A549 (cell line): ENCODE measurements at regions of chr17 and their contacts with region 1.

Region 1: DNA sequence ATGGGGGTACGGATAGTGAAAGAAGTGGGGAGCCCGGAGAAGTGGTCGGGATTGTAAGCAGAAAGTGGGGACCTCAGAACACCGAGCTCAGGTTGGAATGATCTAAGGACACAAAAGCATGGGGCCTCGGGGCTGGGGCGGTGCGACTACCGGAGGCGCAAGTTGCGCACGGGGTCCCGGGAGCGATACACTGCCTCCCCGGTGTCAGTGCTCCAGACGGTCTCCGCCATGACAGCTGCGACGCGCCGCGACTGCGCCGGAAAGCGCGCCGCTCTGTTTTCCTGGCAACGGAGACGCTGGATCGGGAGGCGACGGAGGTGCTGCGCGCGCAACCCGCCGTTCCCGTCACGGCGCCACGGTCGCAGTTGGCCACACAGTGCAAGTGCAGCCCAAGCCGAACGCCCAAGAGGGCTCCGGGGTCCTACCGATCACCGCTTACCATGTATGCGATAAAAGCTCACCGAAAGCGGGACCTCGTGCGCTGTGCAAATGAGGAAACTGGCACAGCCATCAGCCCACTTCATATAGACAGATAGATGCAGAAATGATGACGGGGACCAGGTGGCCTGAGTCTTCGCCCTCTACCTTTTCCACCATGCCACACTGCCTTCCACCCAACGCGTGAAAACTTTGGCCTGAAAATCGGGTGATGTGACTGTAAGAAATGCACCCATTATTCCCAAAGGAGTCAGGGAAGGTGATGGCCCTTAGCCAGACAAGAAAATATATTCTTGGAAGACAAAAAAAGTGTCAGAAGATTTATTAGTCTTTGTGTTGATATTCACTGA is at the start of gene MKS1:
- DNase-seq: peak; percentile 95 to 100
- ATAC-seq: peak; percentile 98 to 100
- H3K4me3 ChIP-seq: peak within 1 kb of the TSS; percentile 77
- H3K27ac ChIP-seq: peak within 1 kb of the TSS; percentile 85 to 89
- H3K4me1 ChIP-seq: peaks cover 9% of the 10 kb centered on the region; the same call in 2 of the 3 replicates
- CTCF ChIP-seq: peak; percentile 34; the same call in 2 of the 3 replicates
- EP300 ChIP-seq: no peak
- POLR2A ChIP-seq: peak; percentile 93
- RAD21 ChIP-seq: no peak
- polyA plus RNA-seq, gene MKS1: 18.6 and 19.0 TPM in 2 replicates

Region 2: GRCh38 chr17:58060596-58061191 is 158.5 kb before region 1 on chr17:
- CTCF ChIA-PET with region 1: no interaction called
- POLR2A ChIA-PET with region 1: no interaction called
- DNase-seq: no peak
- ATAC-seq: no peak
- H3K4me3 ChIP-seq: no peak overlapping the region
- H3K27ac ChIP-seq: no peak overlapping the region
- H3K4me1 ChIP-seq: no peaks in the 10 kb centered on the region
- CTCF ChIP-seq: no peak
- EP300 ChIP-seq: no peak
- POLR2A ChIP-seq: no peak
- RAD21 ChIP-seq: no peak

Region 3: DNA sequence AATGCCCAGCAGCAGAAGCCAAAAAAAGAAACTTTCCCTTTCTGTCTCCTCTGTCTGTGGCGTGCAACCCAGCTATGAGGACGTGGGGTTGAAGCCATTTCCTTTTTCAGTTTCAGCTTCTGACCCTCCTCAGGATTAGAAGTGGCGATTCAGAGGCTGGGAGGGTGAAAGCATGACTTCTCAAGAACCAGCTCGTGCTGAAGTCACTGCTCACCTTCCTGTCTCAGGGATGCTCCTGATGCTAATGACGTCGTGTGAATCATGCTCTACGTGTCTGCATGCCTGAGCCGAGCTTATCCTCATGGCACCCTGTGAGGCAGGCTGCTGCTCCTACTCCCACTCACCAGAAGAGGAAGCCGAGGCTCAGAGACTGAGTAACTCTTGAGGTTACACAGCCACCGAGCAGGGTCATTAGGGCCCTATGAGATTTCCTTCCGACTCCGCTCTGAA is 13.5 kb after region 1 on chr17:
- CTCF ChIA-PET with region 1: interaction called, 29 read pairs
- POLR2A ChIA-PET with region 1: interaction called, 3 read pairs
- DNase-seq: peak in 1 of 2 experiments; percentile 44
- ATAC-seq: peak; percentile 65 to 66
- H3K4me3 ChIP-seq: no peak overlapping the region
- H3K27ac ChIP-seq: no peak overlapping the region
- H3K4me1 ChIP-seq: no peaks in the 10 kb centered on the region
- CTCF ChIP-seq: no peak
- EP300 ChIP-seq: no peak
- POLR2A ChIP-seq: no peak
- RAD21 ChIP-seq: no peak

Region 4: DNA sequence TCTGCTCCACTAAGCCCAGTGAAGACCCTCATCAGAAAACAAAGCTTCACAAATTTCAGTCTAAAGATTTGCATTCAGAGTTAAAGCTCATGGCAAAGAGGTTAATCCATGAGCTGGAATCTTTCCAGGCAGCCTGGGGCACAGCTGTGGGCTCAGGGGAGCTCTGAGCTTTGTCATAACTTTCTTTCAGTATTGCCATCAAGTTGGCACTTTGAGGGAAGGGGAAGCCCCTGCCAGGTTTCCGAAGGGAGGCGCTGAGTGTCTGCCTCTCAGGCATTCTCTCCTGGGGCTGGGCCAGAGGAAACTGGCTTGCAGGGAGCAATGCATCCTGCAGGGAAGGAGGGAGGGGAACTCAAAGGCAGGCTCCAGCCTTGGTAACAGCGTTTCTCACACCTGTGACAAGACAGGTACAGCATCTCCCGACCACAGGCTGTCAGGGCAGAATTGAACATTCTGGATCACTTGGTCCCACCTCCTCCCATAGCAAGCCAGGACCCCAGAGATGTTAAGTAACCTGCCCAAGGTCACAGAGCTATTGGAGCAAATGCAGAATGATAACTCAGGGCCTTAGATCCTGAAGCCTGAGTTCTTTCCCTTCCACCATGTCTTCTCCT is 23.1 kb after region 1 on chr17:
- CTCF ChIA-PET with region 1: interaction called, 62 read pairs
- POLR2A ChIA-PET with region 1: no interaction called
- DNase-seq: no peak
- ATAC-seq: no peak
- H3K4me3 ChIP-seq: no peak overlapping the region
- H3K27ac ChIP-seq: no peak overlapping the region
- H3K4me1 ChIP-seq: no peaks in the 10 kb centered on the region
- CTCF ChIP-seq: no peak
- EP300 ChIP-seq: no peak
- POLR2A ChIP-seq: no peak
- RAD21 ChIP-seq: no peak

Region 5: DNA sequence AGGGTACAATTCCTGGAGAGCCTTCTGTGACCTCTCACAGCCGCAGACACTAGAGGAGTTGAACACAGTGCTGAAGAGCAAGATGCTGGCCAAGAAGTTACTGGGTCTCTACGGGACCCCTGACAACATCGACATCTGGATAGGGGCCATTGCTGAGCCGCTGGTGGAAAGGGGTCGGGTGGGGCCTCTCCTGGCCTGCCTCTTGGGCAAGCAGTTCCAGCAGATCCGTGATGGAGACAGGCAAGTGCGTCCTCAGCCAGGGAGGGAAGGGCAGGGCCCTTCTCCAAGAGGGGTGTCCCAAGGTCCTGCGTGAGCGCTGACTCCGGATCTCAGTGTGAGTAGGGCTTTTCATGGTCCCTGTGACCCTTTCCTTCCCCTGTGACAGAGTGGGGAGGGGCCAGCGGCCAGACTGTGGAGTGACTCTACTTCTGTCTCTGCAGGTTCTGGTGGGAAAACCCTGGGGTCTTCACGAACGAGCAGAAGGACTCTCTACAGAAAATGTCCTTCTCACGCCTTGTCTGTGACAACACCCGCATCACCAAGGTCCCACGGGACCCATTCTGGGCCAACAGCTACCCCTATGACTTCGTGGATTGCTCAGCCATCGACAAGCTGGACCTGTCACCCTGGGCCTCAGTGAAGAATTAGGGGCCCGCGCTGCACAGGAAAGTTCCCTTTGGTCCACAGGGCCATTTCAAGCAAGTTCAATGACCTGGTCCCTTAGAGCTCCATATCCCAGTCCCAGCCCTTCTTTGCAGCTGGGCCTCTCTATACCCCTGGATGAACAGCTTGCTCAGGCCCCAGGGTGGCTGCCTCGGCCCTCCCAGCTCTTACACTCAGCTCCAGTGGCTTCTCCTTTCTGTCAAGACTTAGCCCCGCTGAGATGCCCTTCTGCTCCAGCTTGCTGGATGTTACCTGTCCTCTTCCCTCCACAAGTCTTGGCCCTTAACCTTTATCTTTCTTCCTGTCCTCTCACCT is 48.4 kb after region 1 on chr17:
- CTCF ChIA-PET with region 1: no interaction called
- POLR2A ChIA-PET with region 1: no interaction called
- DNase-seq: no peak
- ATAC-seq: no peak
- H3K4me3 ChIP-seq: no peak overlapping the region
- H3K27ac ChIP-seq: no peak overlapping the region
- H3K4me1 ChIP-seq: no peaks in the 10 kb centered on the region
- CTCF ChIP-seq: no peak
- EP300 ChIP-seq: no peak
- POLR2A ChIP-seq: no peak
- RAD21 ChIP-seq: no peak